ENCODE measurements at regions of chr5 and their contacts with region 1.

Region 1: GRCh38 chr5:157743163-157744050 is at the start of gene LSM11:
- DNase-seq: no peak
- H3K4me3 ChIP-seq: peak within 1 kb of the TSS; percentile 80
- CTCF ChIP-seq: peak; percentile 100

Region 2: GRCh38 chr5:157335534-157336422 is 407.6 kb before region 1 on chr5:
- CTCF ChIA-PET with region 1: interaction called, 205 read pairs
- POLR2A ChIA-PET with region 1: no interaction called
- DNase-seq: peak; percentile 28
- H3K4me3 ChIP-seq: no peak overlapping the region
- CTCF ChIP-seq: no peak

Region 3: DNA sequence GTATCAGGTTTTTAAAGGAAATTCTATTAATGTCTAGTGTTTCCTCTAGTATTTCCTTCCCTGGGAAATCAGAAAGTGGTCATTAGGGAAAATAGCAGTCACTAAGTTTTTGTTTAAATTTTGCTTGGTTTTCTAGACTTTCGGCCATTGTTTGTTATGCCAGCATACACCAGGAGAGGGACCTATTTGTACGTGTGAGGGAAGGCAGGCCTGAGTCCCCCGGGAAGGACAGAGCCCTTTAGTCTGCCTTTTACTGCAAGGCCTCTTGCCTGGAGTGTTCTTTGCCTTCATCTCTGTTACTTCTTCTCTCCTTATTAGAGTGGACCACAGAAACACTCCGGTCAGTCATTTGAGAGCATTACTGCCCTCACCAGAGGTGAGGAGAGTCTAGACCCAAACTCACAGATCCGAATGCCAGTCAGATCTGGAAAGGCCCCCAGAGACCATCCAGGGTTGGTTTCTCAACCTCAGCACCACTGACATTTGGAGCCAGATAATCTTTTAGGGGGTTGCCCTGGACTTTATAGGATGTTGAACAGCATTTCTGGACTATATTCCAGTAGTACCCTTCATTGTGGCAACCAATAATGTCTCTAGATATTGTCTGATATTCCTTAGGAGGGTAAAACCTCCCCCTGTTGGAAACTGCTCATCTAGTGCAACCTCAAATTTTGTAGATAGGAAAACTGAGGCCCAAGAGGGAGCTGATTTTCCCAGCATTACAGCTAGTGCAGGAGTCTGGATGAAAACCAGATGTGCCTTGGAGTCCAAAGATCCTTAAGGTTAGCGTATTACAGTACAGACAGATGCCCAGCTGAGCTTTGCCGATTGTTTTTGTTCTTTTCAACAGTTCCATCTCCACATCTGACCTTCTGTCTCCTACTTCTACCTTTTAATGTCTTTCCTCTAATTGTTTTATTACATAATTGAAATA is 376.4 kb before region 1 on chr5:
- CTCF ChIA-PET with region 1: interaction called, 17 read pairs
- POLR2A ChIA-PET with region 1: no interaction called
- DNase-seq: peak; percentile 68
- H3K4me3 ChIP-seq: no peak overlapping the region
- CTCF ChIP-seq: peak; percentile 76

Region 4: DNA sequence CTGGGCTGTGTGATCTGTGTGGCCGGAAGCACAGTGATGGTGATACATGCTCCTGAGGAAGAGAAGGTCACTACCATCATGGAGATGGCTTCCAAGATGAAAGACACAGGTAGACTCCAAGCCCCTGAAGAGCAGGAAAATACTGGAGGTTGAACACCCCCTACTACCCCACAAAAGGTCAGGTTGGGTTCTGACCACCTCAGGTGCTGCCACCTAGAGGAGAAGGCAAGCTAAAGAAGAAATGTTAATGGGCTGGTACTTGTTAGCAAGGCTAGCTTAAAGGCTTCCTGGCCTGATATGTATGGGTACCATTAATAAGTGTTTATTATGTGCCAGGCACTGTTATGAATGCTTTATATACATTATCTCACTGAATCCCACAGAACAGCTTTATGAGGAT is 271.7 kb before region 1 on chr5:
- CTCF ChIA-PET with region 1: interaction called, 19 read pairs
- POLR2A ChIA-PET with region 1: no interaction called
- DNase-seq: no peak
- H3K4me3 ChIP-seq: no peak overlapping the region
- CTCF ChIP-seq: peak; percentile 54

Region 5: GRCh38 chr5:157511651-157512644 is 231.5 kb before region 1 on chr5:
- CTCF ChIA-PET with region 1: interaction called, 10 read pairs
- POLR2A ChIA-PET with region 1: no interaction called
- DNase-seq: peak; percentile 92
- H3K4me3 ChIP-seq: no peak overlapping the region
- CTCF ChIP-seq: no peak

Region 6: DNA sequence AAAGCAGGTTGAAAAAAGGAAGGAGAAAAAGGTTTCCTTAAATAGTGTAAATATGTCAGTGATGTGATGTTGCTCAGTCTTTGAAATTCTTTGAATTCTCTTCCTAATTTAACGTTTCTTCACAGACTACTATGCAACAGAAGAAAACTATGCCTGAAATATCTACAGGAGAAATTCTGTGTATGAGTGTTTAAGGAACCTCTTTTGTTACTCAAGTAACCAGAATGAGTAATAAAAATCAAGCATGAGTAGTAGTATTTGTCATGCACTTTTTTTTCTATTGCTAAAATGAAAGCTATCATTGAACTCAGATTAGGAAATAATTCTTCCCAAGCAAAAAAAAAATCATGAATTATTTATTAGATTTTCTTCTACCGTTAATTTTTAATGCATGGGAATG is 32.5 kb before region 1 on chr5:
- CTCF ChIA-PET with region 1: interaction called, 10 read pairs
- POLR2A ChIA-PET with region 1: no interaction called
- DNase-seq: peak; percentile 67
- H3K4me3 ChIP-seq: no peak overlapping the region
- CTCF ChIP-seq: no peak

Region 7: DNA sequence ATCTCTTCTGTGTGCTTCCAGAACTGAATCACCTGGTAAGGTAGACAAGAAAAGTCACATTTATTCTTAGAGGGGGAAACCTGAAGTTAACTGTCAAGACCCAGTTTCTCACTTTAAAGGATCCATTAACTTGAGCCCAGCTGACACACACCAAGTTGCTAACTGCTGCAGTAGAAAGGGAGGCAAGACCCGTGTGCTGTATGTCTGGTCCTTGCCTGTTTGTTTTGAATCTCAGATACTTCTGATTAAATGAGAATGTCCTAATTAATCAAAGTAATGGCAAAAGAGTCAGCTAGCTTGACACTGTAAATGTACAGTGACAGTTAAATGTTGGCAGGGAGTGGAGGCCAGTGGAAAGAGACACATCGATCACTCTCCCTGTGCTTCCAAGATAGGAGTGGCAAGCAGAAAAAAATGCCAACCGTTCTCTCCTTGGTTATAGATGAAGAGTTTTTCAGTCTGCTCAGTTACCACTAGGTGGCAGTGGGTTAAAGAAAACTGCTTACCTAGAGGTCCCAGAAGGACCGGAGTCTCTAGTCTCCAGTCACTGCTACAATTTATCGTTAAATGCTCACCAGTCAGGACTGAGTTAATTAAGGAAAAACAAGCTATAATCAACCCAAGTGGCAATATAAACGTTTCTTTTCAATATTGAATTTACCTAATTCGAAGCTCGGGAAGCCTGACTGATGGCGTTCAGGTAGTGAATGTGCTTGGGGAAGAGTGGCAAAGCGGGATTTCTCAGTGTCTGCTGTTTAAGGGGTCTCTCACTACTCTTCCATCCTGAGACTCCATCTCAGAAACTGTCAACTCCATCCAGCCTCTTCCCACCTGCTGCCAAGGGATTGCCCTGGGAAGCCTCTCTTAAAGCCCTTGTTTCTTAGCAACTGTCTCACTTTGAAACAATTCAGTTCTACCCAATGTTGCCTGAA is 18.5 kb after region 1 on chr5:
- CTCF ChIA-PET with region 1: interaction called, 242 read pairs
- POLR2A ChIA-PET with region 1: no interaction called
- DNase-seq: no peak
- H3K4me3 ChIP-seq: no peak overlapping the region
- CTCF ChIP-seq: peak; percentile 69

Measured in AG04449 (cell line).